ENCODE measurements at regions of chr15 and their contacts with region 1.

Region 1: DNA sequence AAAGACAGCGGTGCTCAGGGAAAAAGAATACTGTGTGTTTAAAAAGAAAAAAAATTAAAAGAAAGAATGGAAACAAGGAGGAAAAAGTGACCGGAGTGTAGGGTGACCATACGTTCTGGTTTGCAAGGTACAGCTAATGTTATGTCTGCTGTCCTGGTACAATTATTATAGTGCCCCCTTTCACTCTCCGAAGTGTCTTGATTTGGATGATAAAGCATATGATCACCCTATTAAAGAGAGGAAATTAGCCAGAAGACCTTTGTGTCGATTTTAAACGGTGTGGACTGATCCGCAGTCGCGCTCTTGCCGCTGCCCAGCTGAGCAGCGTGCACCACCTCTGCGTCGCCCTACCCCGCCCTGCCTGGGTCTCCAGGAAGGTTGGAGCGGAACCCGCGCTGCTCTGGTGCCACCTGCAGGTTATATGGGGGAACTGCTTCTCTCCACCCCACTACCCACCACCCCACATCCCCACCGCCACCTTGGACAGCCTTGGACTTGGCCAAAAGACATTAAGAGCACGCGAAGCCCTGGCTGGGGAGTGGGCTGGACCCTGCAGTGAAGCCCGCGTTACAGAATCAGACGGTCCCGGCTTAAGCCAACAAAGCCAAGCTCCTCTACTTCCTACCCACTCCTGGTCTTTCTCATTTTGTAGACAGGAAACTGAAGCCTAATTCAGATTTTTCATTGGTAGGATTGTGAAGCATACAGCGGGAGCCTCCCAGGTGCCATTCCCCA is 41.2 kb upstream of the UBE2Q2 start:
- DNase-seq: peak; percentile 59 to 95
- H3K4me3 ChIP-seq: no peak overlapping the region
- CTCF ChIP-seq: peak in 1 of 3 donors; percentile 19
- POLR2A ChIP-seq: no peak

Region 2: DNA sequence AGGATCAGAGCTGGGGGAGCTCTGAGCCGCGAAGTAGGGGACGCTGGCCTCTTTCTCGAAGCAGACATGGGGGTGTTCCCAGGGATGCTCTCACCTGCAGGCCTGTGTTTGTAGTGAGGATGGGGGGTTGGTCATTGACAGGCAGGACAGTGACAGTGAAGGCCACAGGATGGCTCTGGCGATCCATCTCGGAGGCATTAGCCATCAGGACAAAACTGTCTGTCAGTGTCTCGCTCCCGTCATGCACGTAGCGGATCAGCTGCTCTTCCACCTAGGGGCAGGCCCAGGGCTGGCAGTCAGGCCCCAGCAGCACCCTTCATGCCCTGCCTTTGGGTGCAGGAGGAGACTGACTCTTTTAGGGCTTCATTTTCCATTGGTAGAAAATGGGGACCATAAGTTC is 117.4 kb before region 1 on chr15:
- intact Hi-C with region 1: loop called (anchors 5 kb)
- DNase-seq: no peak
- H3K4me3 ChIP-seq: no peak overlapping the region
- CTCF ChIP-seq: no peak
- POLR2A ChIP-seq: no peak

Region 3: DNA sequence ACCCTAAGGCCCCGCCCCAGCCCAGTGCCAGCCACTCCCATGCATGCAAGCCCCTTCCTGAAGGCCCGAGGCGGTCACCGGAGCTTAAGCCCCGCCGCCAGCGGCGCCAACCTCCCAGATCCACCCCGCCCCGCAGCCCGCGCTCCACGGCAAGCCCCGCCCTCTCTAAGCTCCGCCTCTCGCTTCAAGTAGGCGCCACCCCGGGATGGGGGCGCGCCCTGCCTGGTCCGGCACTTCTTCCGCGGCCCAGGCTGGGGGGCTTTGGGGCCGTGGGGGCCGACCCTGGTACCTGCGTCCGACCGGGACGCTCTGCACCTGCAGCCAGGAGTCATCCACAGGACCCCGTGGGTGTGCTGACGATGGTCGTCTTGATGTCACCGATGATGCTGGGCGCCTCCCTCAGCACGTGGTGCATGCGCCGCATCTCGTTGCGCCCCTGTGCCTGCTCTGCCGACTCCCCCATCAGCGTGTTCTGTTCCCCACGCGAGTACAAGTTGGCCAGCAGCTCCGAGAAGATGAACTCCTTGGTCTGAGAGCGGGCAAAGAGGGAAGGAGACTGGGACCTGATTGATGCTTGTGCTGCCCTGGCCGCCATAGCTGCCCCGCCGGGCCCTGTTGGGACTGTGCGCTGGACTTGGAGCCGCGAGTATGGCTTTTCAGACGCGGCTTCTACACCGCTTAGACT is 63.2 kb before region 1 on chr15:
- intact Hi-C with region 1: loop called (anchors 10 kb)
- DNase-seq: peak; percentile 92 to 99
- H3K4me3 ChIP-seq: peak overlapping the region; percentile 25
- CTCF ChIP-seq: no peak
- POLR2A ChIP-seq: no peak